Activated CD4-positive, alpha-beta T cell treated with anti-CD3 and anti-CD28 coated beads, Interleukin-2, amount 10 ng/mL, durations not matched to agents 24 days and 14 days (primary cell): ENCODE measurements at regions of chr14 and their contacts with region 1.

Region 1: DNA sequence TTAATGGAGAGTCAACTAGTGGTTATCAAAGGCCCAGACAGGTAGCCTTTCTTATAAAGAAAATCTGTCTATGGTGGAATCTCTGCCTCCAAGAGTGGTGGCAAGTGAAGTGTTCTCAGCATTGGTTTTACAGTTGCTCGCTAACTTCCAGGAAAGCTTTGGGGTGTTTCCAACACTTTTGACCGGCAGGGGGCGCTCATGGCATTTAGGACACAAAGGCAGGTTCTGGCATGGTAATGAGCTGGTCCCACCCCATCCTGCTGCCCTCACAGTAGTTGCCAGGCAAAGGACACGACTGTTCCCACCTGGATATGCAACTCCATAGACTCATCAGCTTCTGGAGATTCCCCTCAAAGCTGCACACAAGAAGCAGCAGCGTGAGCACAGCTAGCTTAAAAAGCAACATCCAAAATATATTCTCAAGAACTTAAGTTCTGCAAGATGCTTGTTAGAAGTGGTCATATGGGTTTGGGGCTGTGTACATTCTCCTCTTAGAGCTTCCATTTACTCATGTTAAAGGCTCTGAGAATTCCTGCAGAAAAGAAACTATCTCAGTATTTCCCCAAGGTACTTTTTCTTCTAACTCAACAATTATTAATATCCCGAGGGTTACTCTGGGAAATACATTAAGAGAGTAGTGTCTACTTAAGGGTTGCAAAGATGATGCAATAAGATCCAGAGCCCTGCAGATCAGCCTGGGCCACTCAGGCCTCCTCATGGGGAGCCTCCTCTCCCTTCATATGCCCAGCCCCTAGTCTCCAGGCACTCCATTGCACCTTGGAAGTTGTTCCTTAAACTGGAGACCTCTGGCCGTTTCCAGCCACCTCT is 14.8 kb downstream of the PROX2 start:
- DNase-seq: peak; percentile 97
- H3K4me3 Mint-ChIP-seq: no peak overlapping the region
- H3K27ac Mint-ChIP-seq: no peak overlapping the region
- H3K4me1 Mint-ChIP-seq: peaks cover 4% of the 10 kb centered on the region
- H3K27me3 Mint-ChIP-seq: no peaks in the 10 kb centered on the region

Region 2: GRCh38 chr14:74881431-74882361 is 20.6 kb after region 1 on chr14 and contains the start of gene DLST:
- intact Hi-C with region 1: loop called (anchors 2 kb)
- DNase-seq: peak; percentile 97
- H3K4me3 Mint-ChIP-seq: peak within 1 kb of the TSS; percentile 99
- H3K27ac Mint-ChIP-seq: peak within 1 kb of the TSS; percentile 93
- H3K4me1 Mint-ChIP-seq: peaks cover 44% of the 10 kb centered on the region
- H3K27me3 Mint-ChIP-seq: no peaks in the 10 kb centered on the region
- total RNA-seq, gene DLST: 110 and 111 TPM in 2 replicates

Region 3: GRCh38 chr14:74905375-74906142 is 44.4 kb after region 1 on chr14:
- intact Hi-C with region 1: loop called (anchors 1 kb)
- DNase-seq: peak; percentile 93
- H3K4me3 Mint-ChIP-seq: no peak overlapping the region
- H3K27ac Mint-ChIP-seq: peak overlapping the region; percentile 41
- H3K4me1 Mint-ChIP-seq: peaks cover 5% of the 10 kb centered on the region
- H3K27me3 Mint-ChIP-seq: no peaks in the 10 kb centered on the region

Region 4: GRCh38 chr14:74945823-74946682 is 84.9 kb after region 1 on chr14:
- intact Hi-C with region 1: loop called (anchors 10 kb)
- DNase-seq: peak; percentile 94
- H3K4me3 Mint-ChIP-seq: no peak overlapping the region
- H3K27ac Mint-ChIP-seq: no peak overlapping the region
- H3K4me1 Mint-ChIP-seq: peaks cover 21% of the 10 kb centered on the region
- H3K27me3 Mint-ChIP-seq: peaks cover 2% of the 10 kb centered on the region

Region 5: GRCh38 chr14:75063407-75064213 is 202.5 kb after region 1 on chr14 and contains the start of gene ACYP1:
- intact Hi-C with region 1: loop called (anchors 10 kb)
- DNase-seq: peak; percentile 98
- H3K4me3 Mint-ChIP-seq: peak within 1 kb of the TSS; percentile 100
- H3K27ac Mint-ChIP-seq: peak within 1 kb of the TSS; percentile 97
- H3K4me1 Mint-ChIP-seq: peaks cover 33% of the 10 kb centered on the region
- H3K27me3 Mint-ChIP-seq: no peaks in the 10 kb centered on the region
- total RNA-seq, gene ACYP1: 45.2 and 46.0 TPM in 2 replicates

Region 6: DNA sequence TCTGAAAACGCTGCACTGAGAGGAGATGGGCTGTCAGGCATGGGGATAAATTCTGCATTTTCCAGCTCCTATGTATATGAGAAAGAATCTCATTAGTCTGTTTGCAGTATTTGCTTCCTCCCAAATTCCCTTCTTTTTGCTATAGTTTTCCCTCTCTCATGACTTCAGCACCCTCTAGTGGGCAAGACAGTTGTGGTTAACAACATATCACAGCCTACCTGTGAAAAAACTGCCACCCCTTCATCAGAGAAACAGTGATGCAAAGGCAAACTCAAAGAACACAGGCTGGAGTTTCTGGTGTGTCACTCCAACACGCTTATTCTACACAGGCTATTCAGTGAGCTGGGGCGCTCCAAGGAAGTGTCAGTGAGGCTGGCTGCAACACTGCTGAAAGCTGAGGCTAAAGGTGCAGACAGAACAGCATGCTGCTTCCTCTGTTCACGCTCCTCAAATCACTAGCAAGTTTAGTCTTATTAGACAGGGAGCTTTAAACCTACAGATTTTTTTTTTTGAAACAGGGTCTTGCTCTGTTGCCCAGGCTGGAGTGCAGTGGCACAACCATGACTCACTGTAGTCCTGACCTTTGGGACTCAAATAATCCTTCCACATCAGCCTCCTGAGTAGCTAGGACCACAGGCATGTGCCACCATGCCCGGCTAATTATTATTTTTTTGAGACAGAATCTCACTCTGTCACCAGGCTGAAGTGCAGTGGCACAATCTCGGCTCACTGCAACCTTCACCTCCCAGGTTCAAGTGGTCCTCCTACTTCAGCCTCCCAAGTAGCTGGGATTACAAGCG is 227.7 kb after region 1 on chr14:
- intact Hi-C with region 1: loop called (anchors 1 kb)
- DNase-seq: peak; percentile 86
- H3K4me3 Mint-ChIP-seq: no peak overlapping the region
- H3K27ac Mint-ChIP-seq: no peak overlapping the region
- H3K4me1 Mint-ChIP-seq: no peaks in the 10 kb centered on the region
- H3K27me3 Mint-ChIP-seq: no peaks in the 10 kb centered on the region